ENCODE measurements at regions of chr16 and their contacts with region 1.

Region 1: DNA sequence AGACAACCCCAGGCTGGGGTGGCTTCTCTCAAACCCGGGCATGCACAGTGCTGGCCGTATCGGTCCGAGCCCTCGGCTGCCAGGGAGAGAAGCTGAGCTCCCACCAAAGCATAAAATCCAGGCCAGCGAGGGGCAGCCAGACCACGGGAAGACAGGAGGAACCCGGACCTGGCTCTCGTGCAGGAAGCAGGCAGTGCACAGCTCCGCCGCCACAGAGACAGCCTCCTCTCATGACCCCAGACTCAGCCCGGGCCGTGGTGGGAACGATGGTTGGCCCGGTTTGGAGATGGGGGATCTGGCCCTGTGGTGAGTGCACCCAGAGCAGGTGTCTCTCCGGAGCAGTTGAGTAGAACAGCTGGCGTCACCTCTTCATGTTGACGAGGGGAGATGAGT is 25.1 kb downstream of the MLYCD start:
- DNase-seq: no peak
- ATAC-seq: no peak
- H3K4me3 ChIP-seq: no peak overlapping the region
- H3K27ac ChIP-seq: no peak overlapping the region
- H3K4me1 ChIP-seq: peaks cover 6% of the 10 kb centered on the region
- H3K27me3 ChIP-seq: no peaks in the 10 kb centered on the region
- CTCF ChIP-seq: no peak

Region 2: DNA sequence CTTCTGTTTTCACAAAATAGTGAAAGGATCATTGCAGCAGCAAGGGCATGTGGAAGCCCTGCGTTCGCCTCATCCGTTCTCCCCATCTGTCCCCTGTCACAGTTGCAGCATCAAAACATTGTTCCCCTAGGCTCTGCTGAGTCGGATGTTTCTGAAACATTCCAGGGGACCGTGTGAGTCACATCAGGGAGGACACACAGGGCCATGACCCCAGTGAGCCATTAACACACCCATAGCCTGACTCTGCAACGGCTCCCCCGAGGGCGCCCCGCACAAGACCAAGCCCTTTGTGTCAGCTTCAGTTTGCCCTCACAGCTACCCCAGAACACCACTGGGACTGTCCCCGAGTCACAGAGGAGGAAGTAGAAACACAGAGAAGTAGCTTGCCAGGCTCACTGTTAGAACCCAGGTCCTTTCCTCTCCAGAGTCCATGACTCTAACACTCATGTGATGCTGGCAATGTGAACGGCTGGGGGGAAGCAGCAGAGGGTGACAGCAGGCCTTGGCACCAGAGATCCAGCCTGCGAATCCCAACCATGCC is 179.5 kb before region 1 on chr16:
- CTCF ChIA-PET with region 1: no interaction called
- POLR2A ChIA-PET with region 1: no interaction called
- in situ Hi-C with region 1: no loop called
- intact Hi-C with region 1: no loop called
- DNase-seq: no peak
- ATAC-seq: no peak
- H3K4me3 ChIP-seq: no peak overlapping the region
- H3K27ac ChIP-seq: no peak overlapping the region
- H3K4me1 ChIP-seq: no peaks in the 10 kb centered on the region
- H3K27me3 ChIP-seq: no peaks in the 10 kb centered on the region; the same call in 1 of the 2 replicates
- CTCF ChIP-seq: no peak

Region 3: GRCh38 chr16:83870830-83871229 is 53.1 kb before region 1 on chr16:
- CTCF ChIA-PET with region 1: no interaction called
- POLR2A ChIA-PET with region 1: no interaction called
- in situ Hi-C with region 1: no loop called
- intact Hi-C with region 1: no loop called
- DNase-seq: no peak
- ATAC-seq: no peak
- H3K4me3 ChIP-seq: no peak overlapping the region
- H3K27ac ChIP-seq: no peak overlapping the region
- H3K4me1 ChIP-seq: no peaks in the 10 kb centered on the region
- H3K27me3 ChIP-seq: peaks cover 8% of the 10 kb centered on the region
- CTCF ChIP-seq: no peak

Region 4: GRCh38 chr16:83969771-83970429 is 45.9 kb after region 1 on chr16:
- CTCF ChIA-PET with region 1: interaction called, 14 read pairs
- POLR2A ChIA-PET with region 1: no interaction called
- in situ Hi-C with region 1: no loop called
- intact Hi-C with region 1: no loop called
- DNase-seq: no peak
- ATAC-seq: no peak
- H3K4me3 ChIP-seq: no peak overlapping the region
- H3K27ac ChIP-seq: no peak overlapping the region
- H3K4me1 ChIP-seq: no peaks in the 10 kb centered on the region
- H3K27me3 ChIP-seq: no peaks in the 10 kb centered on the region
- CTCF ChIP-seq: no peak

Region 5: GRCh38 chr16:84040823-84041820 is 117.2 kb after region 1 on chr16:
- CTCF ChIA-PET with region 1: no interaction called
- POLR2A ChIA-PET with region 1: no interaction called
- in situ Hi-C with region 1: no loop called
- intact Hi-C with region 1: no loop called
- DNase-seq: no peak
- ATAC-seq: no peak
- H3K4me3 ChIP-seq: no peak overlapping the region
- H3K27ac ChIP-seq: no peak overlapping the region
- H3K4me1 ChIP-seq: no peaks in the 10 kb centered on the region
- H3K27me3 ChIP-seq: no peaks in the 10 kb centered on the region
- CTCF ChIP-seq: no peak